ENCODE measurements at regions of chr2 and their contacts with region 1.

Region 1: DNA sequence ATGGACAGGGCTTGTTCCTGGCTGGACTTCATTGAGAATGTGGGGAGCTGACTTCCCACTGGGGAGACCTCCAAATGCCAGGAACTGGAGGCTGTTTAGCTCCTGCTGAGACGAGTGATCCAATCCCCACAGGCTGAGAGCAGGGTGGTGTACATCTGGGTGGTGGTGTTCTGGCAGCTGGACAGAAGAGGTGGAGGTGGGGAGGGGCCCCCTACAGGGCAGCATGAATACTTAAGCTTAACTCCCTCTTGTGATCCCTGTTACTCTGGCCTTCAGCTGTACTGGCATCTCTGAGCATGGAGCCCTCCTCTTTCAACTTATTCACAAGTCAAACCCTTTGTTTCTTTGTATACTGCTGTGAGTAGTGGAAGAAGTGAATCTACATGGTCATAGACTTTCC is 167.8 kb upstream of the LYPD1 start:
- DNase-seq: no peak
- ATAC-seq: no peak
- H3K4me3 ChIP-seq: no peak overlapping the region
- H3K27ac ChIP-seq: no peak overlapping the region
- H3K4me1 ChIP-seq: no peaks in the 10 kb centered on the region
- H3K27me3 ChIP-seq: no peaks in the 10 kb centered on the region
- CTCF ChIP-seq: no peak
- EP300 ChIP-seq: no peak
- POLR2A ChIP-seq: no peak
- RAD21 ChIP-seq: no peak

Region 2: GRCh38 chr2:132849118-132849517 is 11.4 kb after region 1 on chr2:
- CTCF ChIA-PET with region 1: no interaction called
- POLR2A ChIA-PET with region 1: no interaction called
- RAD21 ChIA-PET with region 1: no interaction called
- SMC1A ChIA-PET with region 1: interaction called, 12 read pairs
- in situ Hi-C with region 1: no loop called
- intact Hi-C with region 1: no loop called
- DNase-seq: no peak
- ATAC-seq: no peak
- H3K4me3 ChIP-seq: no peak overlapping the region
- H3K27ac ChIP-seq: no peak overlapping the region
- H3K4me1 ChIP-seq: no peaks in the 10 kb centered on the region
- H3K27me3 ChIP-seq: no peaks in the 10 kb centered on the region; a peak in 1 of 4 replicates
- CTCF ChIP-seq: no peak
- EP300 ChIP-seq: no peak
- POLR2A ChIP-seq: no peak
- RAD21 ChIP-seq: no peak

Region 3: DNA sequence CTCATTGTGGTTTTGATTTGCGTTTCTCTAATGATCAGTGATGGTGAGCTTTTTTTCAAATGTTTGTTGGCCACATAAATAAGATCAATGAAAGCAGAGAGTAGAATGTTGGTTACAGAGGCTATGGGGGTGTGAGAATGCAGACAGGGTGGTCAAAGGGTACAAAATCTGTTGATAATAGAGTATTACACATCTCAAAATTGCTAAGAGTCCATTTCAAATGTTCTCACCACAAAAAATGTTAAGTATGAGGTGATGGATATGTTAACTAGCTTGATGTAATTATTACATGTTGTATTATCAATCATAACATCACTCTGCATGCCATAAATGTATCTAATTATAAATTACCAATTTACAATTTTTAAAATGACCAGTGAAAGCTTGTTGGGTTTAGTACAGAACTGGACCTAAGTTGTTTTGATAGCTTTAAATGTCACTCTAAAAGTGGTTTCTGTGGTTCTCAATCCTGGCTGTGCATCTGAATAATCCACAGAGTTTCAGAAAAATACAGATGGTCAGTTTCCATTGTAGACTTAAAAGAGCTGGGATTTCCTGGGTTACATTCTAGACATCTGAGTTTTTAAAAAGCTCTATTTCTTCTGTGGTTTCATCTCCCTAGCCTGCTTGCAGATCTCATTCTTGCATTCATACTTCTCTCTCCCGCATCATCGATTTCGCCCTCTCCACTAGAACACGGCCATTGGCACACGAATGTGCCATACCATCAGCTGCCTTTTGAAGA is 118.3 kb after region 1 on chr2:
- CTCF ChIA-PET with region 1: no interaction called
- POLR2A ChIA-PET with region 1: no interaction called
- RAD21 ChIA-PET with region 1: no interaction called
- SMC1A ChIA-PET with region 1: no interaction called
- in situ Hi-C with region 1: no loop called
- intact Hi-C with region 1: no loop called
- DNase-seq: no peak
- ATAC-seq: no peak
- H3K4me3 ChIP-seq: no peak overlapping the region
- H3K27ac ChIP-seq: no peak overlapping the region
- H3K4me1 ChIP-seq: no peaks in the 10 kb centered on the region
- H3K27me3 ChIP-seq: no peaks in the 10 kb centered on the region
- CTCF ChIP-seq: no peak
- EP300 ChIP-seq: no peak
- POLR2A ChIP-seq: no peak
- RAD21 ChIP-seq: no peak

Region 4: GRCh38 chr2:132991471-132992045 is 153.8 kb after region 1 on chr2:
- CTCF ChIA-PET with region 1: no interaction called
- POLR2A ChIA-PET with region 1: no interaction called
- RAD21 ChIA-PET with region 1: no interaction called
- SMC1A ChIA-PET with region 1: no interaction called
- in situ Hi-C with region 1: no loop called
- intact Hi-C with region 1: no loop called
- DNase-seq: no peak
- ATAC-seq: peak; percentile 68
- H3K4me3 ChIP-seq: no peak overlapping the region
- H3K27ac ChIP-seq: no peak overlapping the region
- H3K4me1 ChIP-seq: no peaks in the 10 kb centered on the region
- H3K27me3 ChIP-seq: no peaks in the 10 kb centered on the region
- CTCF ChIP-seq: no peak
- EP300 ChIP-seq: no peak
- POLR2A ChIP-seq: no peak
- RAD21 ChIP-seq: no peak